ENCODE measurements at regions of chr1 and their contacts with region 1.

Region 1: GRCh38 chr1:194295685-194296084 is 1109.3 kb upstream of the B3GALT2 start:
- DNase-seq: peak; percentile 48 to 72 (median 68)
- H3K4me3 ChIP-seq: no peak overlapping the region
- H3K4me3 Mint-ChIP-seq: no peak overlapping the region
- H3K27ac ChIP-seq: no peak overlapping the region
- H3K27ac Mint-ChIP-seq: peak overlapping the region; percentile 4 to 69 (median 40)
- H3K4me1 ChIP-seq: peaks cover 12% of the 10 kb centered on the region
- H3K4me1 Mint-ChIP-seq: peaks cover 13 to 16% (median 14%) of the 10 kb centered on the region in 4 donors
- H3K27me3 ChIP-seq: no peaks in the 10 kb centered on the region
- H3K27me3 Mint-ChIP-seq: no peaks in the 10 kb centered on the region

Region 2: DNA sequence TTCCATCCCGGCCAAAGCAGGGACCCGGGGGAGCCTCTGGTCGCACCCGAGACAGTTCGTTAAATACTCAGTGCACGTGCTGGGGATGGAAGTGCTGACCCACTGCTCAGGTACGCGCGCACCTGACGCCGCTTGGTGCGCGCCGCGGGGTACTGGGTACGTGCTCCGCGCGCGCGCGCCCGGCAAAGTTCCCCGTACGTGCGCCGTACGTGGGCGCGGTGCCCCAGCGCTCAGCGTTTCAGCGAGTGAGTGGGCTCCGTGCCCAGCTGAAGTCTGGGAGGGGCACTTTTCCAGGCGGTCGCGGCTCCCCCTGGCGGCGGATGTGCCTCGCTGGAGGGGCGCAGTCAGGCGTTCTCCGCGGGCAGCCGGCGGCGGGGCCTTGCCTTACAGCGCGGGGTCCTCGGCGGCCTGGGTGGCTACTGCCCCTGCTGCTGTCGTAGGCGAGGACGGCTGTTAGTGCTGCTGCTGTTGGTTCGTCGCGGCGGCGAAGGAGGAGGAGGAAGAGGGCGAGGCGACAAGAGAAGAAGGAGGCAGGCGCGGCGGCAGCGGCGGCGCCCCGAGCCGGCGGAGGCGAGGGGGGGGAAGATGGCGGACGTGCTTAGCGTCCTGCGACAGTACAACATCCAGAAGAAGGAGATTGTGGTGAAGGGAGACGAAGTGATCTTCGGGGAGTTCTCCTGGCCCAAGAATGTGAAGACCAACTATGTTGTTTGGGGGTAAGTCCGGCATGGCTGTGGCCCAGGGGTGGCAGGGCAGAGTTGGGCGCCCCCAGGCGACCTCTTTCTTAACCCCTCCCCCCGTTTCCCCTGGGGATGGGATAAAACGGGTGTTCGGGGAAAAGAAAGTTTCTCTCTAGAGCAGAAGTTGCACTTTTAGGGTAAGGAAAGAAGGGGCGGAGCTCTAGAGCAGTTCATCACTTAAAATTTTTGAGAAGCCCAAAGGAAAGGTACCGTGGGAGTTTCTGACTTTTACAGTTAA is 1173.8 kb before region 1 on chr1 and contains the start of gene CDC73:
- CTCF ChIA-PET with region 1: interaction called, 5 read pairs
- POLR2A ChIA-PET with region 1: no interaction called
- intact Hi-C with region 1: loop called (anchors 5 kb)
- DNase-seq: peak; percentile 98 to 100 (median 99)
- H3K4me3 ChIP-seq: peak within 1 kb of the TSS; percentile 68 to 89
- H3K4me3 Mint-ChIP-seq: peak within 1 kb of the TSS; percentile 90 to 98 (median 94)
- H3K27ac ChIP-seq: peak within 1 kb of the TSS; percentile 80
- H3K27ac Mint-ChIP-seq: peak within 1 kb of the TSS; percentile 93 to 98 (median 98)
- H3K4me1 ChIP-seq: peaks cover 45% of the 10 kb centered on the region
- H3K4me1 Mint-ChIP-seq: peaks cover 27 to 72% (median 43%) of the 10 kb centered on the region in 4 donors
- H3K27me3 ChIP-seq: no peaks in the 10 kb centered on the region
- H3K27me3 Mint-ChIP-seq: no peaks in the 10 kb centered on the region
- total RNA-seq, gene CDC73: 70.4 to 75.0 TPM

Region 3: GRCh38 chr1:193143285-193143684 is 1152.4 kb before region 1 on chr1:
- CTCF ChIA-PET with region 1: interaction called, 4 read pairs
- POLR2A ChIA-PET with region 1: no interaction called
- intact Hi-C with region 1: loop called (anchors 1 kb)
- DNase-seq: peak in 2 of 5 donors; percentile 16 to 20
- H3K4me3 ChIP-seq: no peak overlapping the region
- H3K4me3 Mint-ChIP-seq: no peak overlapping the region
- H3K27ac ChIP-seq: no peak overlapping the region
- H3K27ac Mint-ChIP-seq: peak overlapping the region in 1 of 7 donors; percentile 8
- H3K4me1 ChIP-seq: peaks cover 9% of the 10 kb centered on the region
- H3K4me1 Mint-ChIP-seq: peaks cover 15 to 38% (median 30%) of the 10 kb centered on the region in 4 donors
- H3K27me3 ChIP-seq: no peaks in the 10 kb centered on the region
- H3K27me3 Mint-ChIP-seq: no peaks in the 10 kb centered on the region

Region 4: GRCh38 chr1:193406901-193407300 is 888.8 kb before region 1 on chr1:
- CTCF ChIA-PET with region 1: no interaction called
- POLR2A ChIA-PET with region 1: no interaction called
- intact Hi-C with region 1: loop called (anchors 1 kb)
- DNase-seq: peak in 4 of 5 donors; percentile 48 to 63 (median 56)
- H3K4me3 ChIP-seq: no peak overlapping the region
- H3K4me3 Mint-ChIP-seq: peak overlapping the region in 6 of 8 donors; percentile 0 to 29 (median 8)
- H3K27ac ChIP-seq: no peak overlapping the region
- H3K27ac Mint-ChIP-seq: peak overlapping the region in 4 of 7 donors; percentile 15 to 81 (median 52)
- H3K4me1 ChIP-seq: peaks cover 26% of the 10 kb centered on the region
- H3K4me1 Mint-ChIP-seq: peaks cover 21 to 40% (median 29%) of the 10 kb centered on the region in 4 donors
- H3K27me3 ChIP-seq: no peaks in the 10 kb centered on the region
- H3K27me3 Mint-ChIP-seq: no peaks in the 10 kb centered on the region

Region 5: DNA sequence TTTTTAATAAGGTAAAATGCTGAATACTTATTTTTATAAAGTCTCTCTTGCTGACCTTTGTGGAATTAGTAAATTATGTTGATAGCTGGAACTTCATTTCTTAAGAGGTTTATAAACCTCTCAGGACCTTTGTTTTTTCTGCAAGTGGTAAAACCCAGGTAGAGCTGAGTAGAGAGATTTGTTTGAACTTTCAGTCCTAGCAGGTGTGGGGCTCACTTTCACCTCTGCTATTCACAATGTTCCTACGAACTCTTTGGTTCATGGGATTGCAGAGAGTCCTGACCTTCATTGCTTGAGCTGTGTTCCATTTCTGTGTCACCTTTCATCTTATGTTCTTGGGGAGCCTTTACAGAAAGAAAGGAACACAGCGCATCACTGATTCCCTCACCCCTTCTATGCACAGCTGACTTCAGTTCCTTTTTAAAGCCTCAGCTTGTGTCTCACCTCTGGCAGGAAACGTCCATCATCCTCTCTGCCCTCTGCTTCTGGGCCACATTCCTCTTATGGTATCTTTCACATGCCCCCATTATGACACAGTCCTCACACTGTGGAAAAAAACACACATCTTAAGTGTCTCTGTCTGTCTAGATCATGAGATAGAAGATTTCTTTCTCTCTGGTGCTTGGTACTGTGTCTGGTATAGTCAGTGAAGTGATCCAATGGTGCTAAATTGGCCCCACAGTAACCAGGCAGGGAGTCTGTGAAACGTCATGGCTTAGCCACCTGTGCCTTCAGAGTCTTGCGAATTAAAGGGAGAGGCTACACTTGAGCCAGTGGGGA is 846.8 kb before region 1 on chr1:
- CTCF ChIA-PET with region 1: no interaction called
- POLR2A ChIA-PET with region 1: no interaction called
- intact Hi-C with region 1: loop called (anchors 2 kb)
- DNase-seq: peak; percentile 39 to 67 (median 41)
- H3K4me3 ChIP-seq: no peak overlapping the region
- H3K4me3 Mint-ChIP-seq: peak overlapping the region in 7 of 8 donors; percentile 1 to 53 (median 9)
- H3K27ac ChIP-seq: peak overlapping the region; percentile 36
- H3K27ac Mint-ChIP-seq: peak overlapping the region; percentile 68 to 95 (median 82)
- H3K4me1 ChIP-seq: peaks cover 18% of the 10 kb centered on the region
- H3K4me1 Mint-ChIP-seq: peaks cover 16 to 23% (median 18%) of the 10 kb centered on the region in 4 donors
- H3K27me3 ChIP-seq: no peaks in the 10 kb centered on the region
- H3K27me3 Mint-ChIP-seq: no peaks in the 10 kb centered on the region

Region 6: DNA sequence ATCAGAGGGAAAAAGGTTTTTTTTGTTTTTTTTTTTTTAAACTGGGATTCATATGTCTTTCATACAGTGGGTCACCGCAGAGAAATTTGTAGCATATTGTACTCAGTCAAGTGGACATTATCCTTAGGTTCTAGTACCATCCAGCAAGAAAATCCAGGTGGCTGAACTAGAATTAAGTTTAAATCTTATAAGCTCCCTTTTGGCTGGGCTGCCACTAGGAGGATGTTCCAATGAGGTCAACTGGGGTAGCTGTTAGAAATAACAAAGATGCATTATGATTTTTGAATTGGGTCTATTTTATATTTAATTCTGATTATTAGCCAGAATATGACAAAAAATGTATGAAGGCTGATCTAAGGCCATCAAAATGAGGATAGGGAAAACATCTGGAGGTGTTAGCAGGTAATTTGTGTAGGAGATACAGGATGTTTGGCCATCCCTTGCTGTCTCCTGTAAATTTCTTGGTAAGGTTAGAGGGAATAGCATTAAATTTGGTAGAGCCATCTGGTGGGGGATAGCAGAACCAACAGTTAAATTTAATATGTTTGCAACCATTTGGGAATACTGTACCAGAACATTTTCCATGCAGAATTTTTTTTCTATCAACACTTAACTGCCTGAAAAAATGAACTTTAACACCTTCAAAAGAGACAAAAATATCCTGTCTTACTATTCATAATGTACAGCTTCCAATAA is 540.8 kb before region 1 on chr1:
- CTCF ChIA-PET with region 1: no interaction called
- POLR2A ChIA-PET with region 1: interaction called, 3 read pairs
- intact Hi-C with region 1: loop called (anchors 10 kb)
- DNase-seq: no peak
- H3K4me3 ChIP-seq: no peak overlapping the region
- H3K4me3 Mint-ChIP-seq: no peak overlapping the region
- H3K27ac ChIP-seq: no peak overlapping the region
- H3K27ac Mint-ChIP-seq: peak overlapping the region in 1 of 7 donors; percentile 10
- H3K4me1 ChIP-seq: peaks cover 5% of the 10 kb centered on the region
- H3K4me1 Mint-ChIP-seq: peaks cover 2 to 13% (median 3%) of the 10 kb centered on the region in 4 donors
- H3K27me3 ChIP-seq: no peaks in the 10 kb centered on the region
- H3K27me3 Mint-ChIP-seq: no peaks in the 10 kb centered on the region